PC-9 (cell line): ENCODE measurements at regions of chr22 and their contacts with region 1.

Region 1: DNA sequence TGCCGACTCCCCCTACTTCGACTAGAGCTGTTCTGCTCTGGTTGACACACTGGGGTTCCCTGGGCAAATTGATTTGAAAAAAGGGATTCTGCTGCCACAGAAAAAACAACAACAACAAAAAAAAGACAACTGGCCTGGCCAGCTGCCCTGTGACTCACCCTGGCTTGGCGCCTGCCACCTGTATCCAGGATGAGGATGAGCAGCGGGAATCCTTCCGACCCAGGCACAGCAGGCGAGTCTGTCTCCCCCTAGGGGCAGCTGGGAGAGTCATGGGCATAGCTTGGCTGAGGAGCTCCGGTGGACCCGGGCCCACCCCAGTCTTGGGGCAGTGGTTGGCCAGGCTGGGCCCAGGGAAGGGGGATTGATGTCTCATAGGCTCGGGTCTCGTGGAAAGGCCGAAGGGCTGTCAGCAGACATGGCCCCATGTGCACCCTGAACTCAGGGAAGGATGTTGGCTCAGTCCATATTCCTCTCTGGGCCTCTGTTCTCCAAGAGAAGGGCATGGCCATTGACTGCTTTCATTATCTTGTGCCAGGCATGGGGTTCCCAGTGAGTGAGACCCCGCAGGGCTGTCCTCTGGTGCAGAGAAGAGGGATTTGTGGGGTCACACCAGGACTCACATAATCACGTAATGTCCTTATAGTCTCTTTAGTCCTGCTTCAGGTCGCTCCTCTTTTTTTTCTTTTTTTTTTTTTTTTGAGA is 10.4 kb upstream of the SUN2 start:
- DNase-seq: peak; percentile 79 to 89
- H3K4me3 ChIP-seq: no peak overlapping the region
- H3K27ac ChIP-seq: no peak overlapping the region
- H3K4me1 ChIP-seq: peaks cover 26% of the 10 kb centered on the region
- H3K27me3 ChIP-seq: no peaks in the 10 kb centered on the region
- CTCF ChIP-seq: peak; percentile 98

Region 2: DNA sequence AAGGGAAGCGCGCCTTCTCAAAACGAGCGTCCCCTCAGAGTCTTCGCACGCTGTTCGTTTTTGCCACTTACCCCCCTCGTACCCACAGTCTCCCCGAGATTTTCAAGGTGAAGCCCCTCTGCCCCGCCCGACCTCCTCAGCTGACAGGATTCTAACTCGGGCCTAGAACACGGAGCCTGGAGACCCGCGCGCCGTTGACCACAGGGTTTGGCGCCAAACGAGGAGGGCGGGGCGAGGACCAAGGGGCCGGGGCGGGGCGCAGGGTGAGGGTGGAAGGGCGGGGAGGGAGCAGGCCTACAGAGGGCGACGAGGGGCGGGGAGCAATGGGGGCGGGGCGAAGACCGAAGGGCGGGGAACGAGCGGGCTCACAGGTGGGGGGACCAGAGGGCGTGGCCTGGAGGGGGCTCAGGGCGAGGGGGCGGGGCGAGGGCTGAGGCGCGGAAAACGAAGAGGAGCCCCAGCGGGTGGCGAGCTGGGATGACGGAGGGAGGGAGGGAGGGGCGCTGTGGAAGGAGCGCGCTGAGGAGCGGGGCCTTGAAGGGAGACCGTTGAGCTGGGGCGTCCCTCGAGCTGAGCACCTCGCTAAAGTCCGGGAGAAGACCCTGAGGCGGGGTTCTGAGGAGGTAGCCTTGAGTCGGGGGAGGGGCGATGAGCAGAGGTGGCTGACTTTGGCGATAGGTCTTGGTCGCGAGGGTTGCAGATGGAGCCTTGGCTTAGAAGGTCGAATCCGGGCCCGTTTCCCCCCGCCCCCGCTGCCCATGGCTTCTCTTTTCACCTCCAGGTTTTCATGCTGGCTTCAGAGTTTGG is 196.1 kb before region 1 on chr22 and contains the start of gene DMC1:
- CTCF ChIA-PET with region 1: no interaction called
- POLR2A ChIA-PET with region 1: no interaction called
- intact Hi-C with region 1: no loop called
- DNase-seq: peak; percentile 77 to 91
- H3K4me3 ChIP-seq: peak within 1 kb of the TSS; percentile 64
- H3K27ac ChIP-seq: no peak within 1 kb of the TSS
- H3K4me1 ChIP-seq: peaks cover 10% of the 10 kb centered on the region
- H3K27me3 ChIP-seq: no peaks in the 10 kb centered on the region
- CTCF ChIP-seq: no peak
- total RNA-seq, gene DMC1: 5.6 and 6.3 TPM in 2 replicates

Region 3: DNA sequence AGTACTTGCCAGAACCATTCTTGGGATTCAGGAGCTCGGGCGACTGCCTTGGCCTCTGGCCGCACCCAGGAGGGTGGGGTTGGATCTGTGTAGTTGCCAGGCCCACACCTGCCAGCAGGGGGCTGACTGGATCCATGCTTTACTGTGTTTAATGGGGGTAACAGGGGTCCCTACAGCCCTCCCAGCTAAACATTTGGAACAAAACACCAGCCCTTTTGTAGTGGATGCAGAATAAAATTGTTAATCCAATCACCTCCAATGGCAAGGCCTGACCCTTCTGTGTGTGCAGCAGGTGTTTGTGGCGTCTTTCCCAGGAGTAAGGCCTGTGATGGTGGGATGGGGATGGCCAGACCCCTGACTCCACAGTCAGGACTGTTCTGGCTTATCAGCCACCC is 32.9 kb before region 1 on chr22:
- CTCF ChIA-PET with region 1: interaction called, 10 read pairs
- POLR2A ChIA-PET with region 1: interaction called, 4 read pairs
- intact Hi-C with region 1: no loop called
- DNase-seq: peak in 1 of 2 experiments; percentile 52
- H3K4me3 ChIP-seq: no peak overlapping the region
- H3K27ac ChIP-seq: 0 out of 2 replicates have a peak overlapping the region, but pooled peaks have one; percentile 33
- H3K4me1 ChIP-seq: peaks cover 7% of the 10 kb centered on the region; the same call in 1 of the 2 replicates
- H3K27me3 ChIP-seq: no peaks in the 10 kb centered on the region
- CTCF ChIP-seq: peak; percentile 94

Region 4: GRCh38 chr22:38802671-38803121 is 36.5 kb after region 1 on chr22:
- CTCF ChIA-PET with region 1: interaction called, 10 read pairs
- POLR2A ChIA-PET with region 1: no interaction called
- intact Hi-C with region 1: no loop called
- DNase-seq: peak; percentile 87 to 99
- H3K4me3 ChIP-seq: no peak overlapping the region; the same call in 1 of the 2 replicates
- H3K27ac ChIP-seq: peak overlapping the region; percentile 53
- H3K4me1 ChIP-seq: peaks cover 17% of the 10 kb centered on the region
- H3K27me3 ChIP-seq: no peaks in the 10 kb centered on the region
- CTCF ChIP-seq: no peak

Region 5: DNA sequence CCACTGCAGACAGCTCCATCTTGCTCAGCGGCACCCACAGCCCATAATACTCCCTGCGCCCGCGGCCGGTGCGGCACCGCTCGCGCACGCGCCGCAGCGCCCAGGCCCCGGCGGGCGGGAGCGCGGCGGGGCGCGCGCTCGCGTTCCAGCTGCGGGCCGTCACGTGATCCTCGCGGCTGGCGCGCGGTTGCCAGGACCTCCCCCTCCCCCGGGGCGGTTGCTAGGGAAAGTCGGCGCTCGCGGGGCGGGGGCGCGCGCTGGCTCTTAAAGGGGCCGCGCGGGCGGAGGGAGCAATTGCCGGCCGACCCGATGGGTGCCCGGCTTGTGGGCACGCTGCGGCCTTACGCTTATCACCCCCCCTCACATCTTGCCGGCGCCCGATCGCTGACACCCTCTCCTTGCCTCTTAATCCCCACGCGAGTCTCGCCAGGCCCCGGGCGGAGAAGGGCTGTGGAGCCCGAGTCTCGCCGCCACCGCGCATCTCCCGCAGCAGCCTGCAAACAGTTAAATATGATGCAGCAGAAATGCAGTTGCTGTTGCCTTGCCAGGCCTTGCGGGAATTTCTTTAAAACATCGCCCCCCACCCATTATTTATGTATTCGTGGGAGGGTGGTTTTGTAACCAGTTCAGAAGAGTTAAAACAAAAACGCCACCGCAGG is 106.1 kb after region 1 on chr22 and contains the start of gene CBX6:
- CTCF ChIA-PET with region 1: interaction called, 18 read pairs
- POLR2A ChIA-PET with region 1: interaction called, 3 read pairs
- intact Hi-C with region 1: loop called (anchors 1 kb)
- DNase-seq: peak; percentile 73 to 97
- H3K4me3 ChIP-seq: peak within 1 kb of the TSS; percentile 83
- H3K27ac ChIP-seq: peak within 1 kb of the TSS; percentile 62
- H3K4me1 ChIP-seq: peaks cover 28% of the 10 kb centered on the region
- H3K27me3 ChIP-seq: no peaks in the 10 kb centered on the region
- CTCF ChIP-seq: no peak
- total RNA-seq, gene CBX6: 131 and 136 TPM in 2 replicates

Region 6: DNA sequence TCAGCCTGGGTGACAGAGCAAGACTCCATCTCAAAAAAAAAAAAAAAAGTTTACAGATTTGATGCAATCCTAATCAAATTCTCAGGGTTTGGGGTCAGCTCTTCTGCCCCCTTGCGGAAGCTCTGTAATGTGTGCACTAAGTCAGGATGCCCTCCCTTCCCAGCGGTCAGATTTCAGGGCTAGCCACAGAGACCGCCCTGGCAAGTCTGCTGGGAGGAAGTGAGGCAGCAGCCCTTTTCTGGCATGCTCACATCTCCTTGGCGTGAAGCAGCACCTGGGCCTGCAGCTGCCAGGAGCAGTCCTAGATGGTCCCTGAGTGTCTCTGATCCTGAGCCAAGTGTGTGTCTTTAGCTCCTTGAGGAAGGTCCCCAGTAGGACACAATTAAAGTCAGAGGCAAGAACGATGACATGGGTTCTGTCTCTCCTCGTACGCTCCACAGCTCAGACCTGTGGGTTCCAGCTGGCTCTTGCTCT is 237.0 kb after region 1 on chr22:
- CTCF ChIA-PET with region 1: interaction called, 4 read pairs
- POLR2A ChIA-PET with region 1: no interaction called
- intact Hi-C with region 1: loop called (anchors 2 kb)
- DNase-seq: peak; percentile 89 to 94
- H3K4me3 ChIP-seq: no peak overlapping the region
- H3K27ac ChIP-seq: peak overlapping the region; percentile 20; the same call in 1 of the 2 replicates
- H3K4me1 ChIP-seq: peaks cover 11% of the 10 kb centered on the region
- H3K27me3 ChIP-seq: no peaks in the 10 kb centered on the region
- CTCF ChIP-seq: peak; percentile 95

Region 7: GRCh38 chr22:39532215-39533071 is 766.2 kb after region 1 on chr22 and contains the start of gene RPS19BP1:
- CTCF ChIA-PET with region 1: interaction called, 6 read pairs
- POLR2A ChIA-PET with region 1: no interaction called
- intact Hi-C with region 1: loop called (anchors 5 kb)
- DNase-seq: peak; percentile 100
- H3K4me3 ChIP-seq: peak within 1 kb of the TSS; percentile 87
- H3K27ac ChIP-seq: peak within 1 kb of the TSS; percentile 30
- H3K4me1 ChIP-seq: peaks cover 44% of the 10 kb centered on the region
- H3K27me3 ChIP-seq: no peaks in the 10 kb centered on the region
- CTCF ChIP-seq: peak; percentile 24; the same call in 1 of the 2 replicates
- total RNA-seq, gene RPS19BP1: 60.7 and 94.3 TPM in 2 replicates